Gastrocnemius medialis (tissue), 4 donors: ENCODE measurements at regions of chr14 and their contacts with region 1.

Region 1: DNA sequence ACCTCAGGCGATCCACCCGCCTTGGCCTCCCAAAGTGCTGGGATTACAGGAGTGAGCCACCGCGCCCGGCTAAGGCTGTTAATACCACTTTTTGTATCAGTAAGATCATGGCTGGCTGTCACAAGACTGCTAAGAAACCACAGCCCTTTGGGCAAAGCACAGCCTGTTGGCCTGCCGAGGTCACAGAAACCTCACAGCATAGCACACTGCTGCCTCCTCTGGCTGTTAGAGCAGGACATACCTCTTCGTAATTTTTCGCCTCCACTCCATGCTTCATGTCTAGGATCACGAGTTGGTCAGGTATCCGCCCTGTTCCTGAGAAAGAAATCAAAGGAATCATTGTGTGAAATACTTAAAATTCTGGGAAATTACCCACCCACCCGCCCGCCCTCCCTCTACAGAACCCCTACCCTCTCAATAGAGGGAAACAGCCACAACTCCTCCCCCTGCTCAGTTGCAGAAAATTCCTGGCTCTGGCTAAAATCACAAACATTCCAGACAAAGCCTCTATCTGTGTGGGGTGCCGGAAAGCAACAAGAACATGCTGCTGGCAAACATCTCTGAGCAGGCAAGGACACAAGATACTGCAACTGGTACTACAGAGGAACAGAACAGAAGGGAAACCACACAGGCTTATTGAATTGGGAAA is 20.7 kb upstream of the NEK9 start:
- DNase-seq: peak; percentile 75 to 80
- ATAC-seq: peak; percentile 38 to 49
- H3K4me3 ChIP-seq: peak overlapping the region in 1 of 4 donors; percentile 15
- H3K27ac ChIP-seq: peak overlapping the region; percentile 89 to 95 (median 92)
- H3K4me1 ChIP-seq: peaks cover 81 to 83% of the 10 kb centered on the region in 2 donors
- H3K27me3 ChIP-seq: no peaks in the 10 kb centered on the region
- CTCF ChIP-seq: peak in 2 of 5 experiments; percentile 21 to 29
- POLR2A ChIP-seq: peak in 1 of 2 donors; percentile 11

Region 2: DNA sequence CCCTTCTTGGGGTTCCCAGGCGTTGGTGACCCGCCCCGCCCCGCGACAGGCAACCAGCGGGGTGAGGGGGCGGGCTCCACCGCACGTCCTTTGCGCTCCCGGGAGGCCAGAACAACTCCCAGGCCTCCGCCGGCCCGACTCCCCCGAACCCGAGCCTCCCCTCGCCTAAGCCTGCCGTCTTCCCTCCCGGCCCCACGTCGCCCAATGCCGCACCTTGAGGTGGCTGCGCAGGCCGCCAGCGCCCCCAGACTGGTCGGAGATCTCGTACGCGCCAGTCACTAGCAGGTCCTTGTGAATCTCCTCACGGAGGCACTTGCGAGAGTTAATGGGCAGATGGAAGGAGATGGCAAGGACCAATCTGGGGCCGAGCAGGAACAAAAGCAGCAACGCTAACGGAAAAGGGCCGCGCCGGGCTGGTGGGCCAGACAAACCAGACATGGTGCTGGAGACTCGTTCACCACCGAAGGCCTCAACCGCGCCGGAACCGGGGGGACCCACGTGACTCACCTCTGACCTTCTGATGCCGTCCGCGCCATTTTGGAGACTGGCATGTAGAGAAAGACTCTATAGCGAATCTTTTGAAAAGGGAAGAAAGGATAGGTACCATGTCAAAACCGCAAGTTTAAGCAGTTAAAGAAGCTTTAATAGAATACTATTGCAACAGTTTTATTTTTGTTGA is 28.7 kb after region 1 on chr14 and contains the start of gene TMED10:
- in situ Hi-C with region 1: no loop called
- intact Hi-C with region 1: loop called (anchors 1 kb)
- DNase-seq: peak; percentile 86 to 87
- ATAC-seq: peak; percentile 93
- H3K4me3 ChIP-seq: peak within 1 kb of the TSS; percentile 78 to 97 (median 92)
- H3K27ac ChIP-seq: peak within 1 kb of the TSS; percentile 98 to 100 (median 98)
- H3K4me1 ChIP-seq: peaks cover 33 to 35% of the 10 kb centered on the region in 2 donors
- H3K27me3 ChIP-seq: no peaks in the 10 kb centered on the region
- CTCF ChIP-seq: peak in 2 of 5 experiments; percentile 12 to 15
- POLR2A ChIP-seq: peak; percentile 84 to 88
- total RNA-seq, gene TMED10: 161 to 362 (median 255) TPM

Region 3: DNA sequence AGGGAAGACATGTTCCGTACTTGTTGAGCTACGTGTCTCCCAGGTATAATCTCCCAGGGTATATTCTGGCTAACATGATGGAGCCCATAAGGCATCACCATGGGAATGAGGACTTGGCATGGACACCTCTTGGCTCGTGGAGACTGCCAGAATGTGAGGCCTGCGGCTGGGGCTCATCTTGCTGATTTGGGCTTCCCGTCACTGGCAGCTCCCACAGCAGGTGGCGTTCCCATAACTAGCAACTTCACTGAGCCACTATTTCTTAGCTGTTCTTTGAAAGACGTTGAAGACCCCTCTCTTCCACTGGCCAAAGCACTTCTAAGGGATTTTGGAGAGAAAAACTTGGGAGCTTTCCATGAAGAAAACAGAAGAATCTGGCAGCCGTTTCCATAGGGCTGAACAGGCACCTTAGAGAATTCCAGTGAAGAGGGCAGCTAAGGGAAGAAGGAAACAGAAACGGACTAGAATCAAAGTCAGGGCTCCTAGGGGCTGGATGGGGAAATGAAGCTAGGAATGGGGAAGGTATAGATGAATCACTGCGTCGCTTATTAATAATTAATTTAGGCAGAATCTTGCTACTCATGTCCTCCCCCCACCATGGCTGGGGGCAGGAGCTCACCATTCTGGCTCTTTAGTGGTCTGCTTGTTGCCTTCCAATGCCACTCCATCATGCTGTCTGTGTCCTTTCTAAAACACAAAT is 91.4 kb after region 1 on chr14:
- in situ Hi-C with region 1: loop called in 1 of 4 experiments (anchors 10 kb)
- intact Hi-C with region 1: loop called (anchors 1 kb)
- DNase-seq: no peak
- ATAC-seq: no peak
- H3K4me3 ChIP-seq: no peak overlapping the region
- H3K27ac ChIP-seq: peak overlapping the region; percentile 87 to 98 (median 93)
- H3K4me1 ChIP-seq: peaks cover 40 to 43% of the 10 kb centered on the region in 2 donors
- H3K27me3 ChIP-seq: no peaks in the 10 kb centered on the region
- CTCF ChIP-seq: peak in 4 of 5 experiments; percentile 14 to 37 (median 22)
- POLR2A ChIP-seq: no peak

Region 4: GRCh38 chr14:75278422-75279161 is 131.0 kb after region 1 on chr14 and contains the start of gene FOS:
- in situ Hi-C with region 1: no loop called
- intact Hi-C with region 1: loop called (anchors 5 kb)
- DNase-seq: peak; percentile 92 to 93
- ATAC-seq: peak; percentile 76 to 80
- H3K4me3 ChIP-seq: peak within 1 kb of the TSS; percentile 84 to 95 (median 90)
- H3K27ac ChIP-seq: peak within 1 kb of the TSS; percentile 98 to 100 (median 100)
- H3K4me1 ChIP-seq: peaks cover 27 to 30% of the 10 kb centered on the region in 2 donors
- H3K27me3 ChIP-seq: no peaks in the 10 kb centered on the region
- CTCF ChIP-seq: peak in 1 of 5 experiments; percentile 19
- POLR2A ChIP-seq: peak; percentile 99 to 100
- total RNA-seq, gene FOS: 16.3 to 110 (median 53.5) TPM

Region 5: DNA sequence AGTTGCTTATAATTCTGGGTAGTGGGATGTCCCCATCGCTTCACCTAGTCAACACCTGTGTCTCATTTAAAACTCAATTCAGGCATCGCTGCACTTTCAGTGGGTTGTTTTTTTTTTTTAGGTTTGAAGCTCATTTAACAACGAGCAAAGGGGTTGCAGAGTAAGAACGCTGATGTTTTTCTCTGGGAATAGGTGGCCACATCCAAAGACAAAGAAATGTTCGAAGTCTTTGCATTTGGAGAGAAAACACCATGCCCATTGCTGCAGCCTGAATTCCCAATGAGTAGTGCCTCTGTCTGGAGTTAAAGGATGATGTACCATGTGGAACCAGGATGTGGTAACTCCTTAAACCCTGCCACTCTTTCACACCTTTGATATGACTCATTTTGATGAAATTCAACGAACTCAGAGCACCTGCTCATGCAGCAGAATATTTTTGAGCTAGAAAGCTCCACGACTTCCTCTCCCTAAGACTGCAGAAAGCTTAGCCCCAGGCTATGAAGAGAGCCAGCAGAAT is 339.7 kb after region 1 on chr14:
- in situ Hi-C with region 1: loop called in 2 of 4 experiments (anchors 10 to 25 kb)
- intact Hi-C with region 1: no loop called
- DNase-seq: no peak
- ATAC-seq: no peak
- H3K4me3 ChIP-seq: no peak overlapping the region
- H3K27ac ChIP-seq: no peak overlapping the region
- H3K4me1 ChIP-seq: peaks cover 0 to 6% of the 10 kb centered on the region in 2 donors
- H3K27me3 ChIP-seq: no peaks in the 10 kb centered on the region
- CTCF ChIP-seq: no peak
- POLR2A ChIP-seq: no peak

Region 6: GRCh38 chr14:75654127-75654732 is 506.7 kb after region 1 on chr14:
- in situ Hi-C with region 1: no loop called
- intact Hi-C with region 1: no loop called
- DNase-seq: peak; percentile 66 to 78
- ATAC-seq: peak; percentile 80 to 87
- H3K4me3 ChIP-seq: no peak overlapping the region
- H3K27ac ChIP-seq: peak overlapping the region in 3 of 4 donors; percentile 39 to 58 (median 49)
- H3K4me1 ChIP-seq: peaks cover 16 to 48% of the 10 kb centered on the region in 2 donors
- H3K27me3 ChIP-seq: no peaks in the 10 kb centered on the region
- CTCF ChIP-seq: peak; percentile 93 to 97 (median 95)
- POLR2A ChIP-seq: no peak